Endothelial cell of umbilical vein (primary cell): ENCODE measurements at regions of chr15 and their contacts with region 1.

Region 1: DNA sequence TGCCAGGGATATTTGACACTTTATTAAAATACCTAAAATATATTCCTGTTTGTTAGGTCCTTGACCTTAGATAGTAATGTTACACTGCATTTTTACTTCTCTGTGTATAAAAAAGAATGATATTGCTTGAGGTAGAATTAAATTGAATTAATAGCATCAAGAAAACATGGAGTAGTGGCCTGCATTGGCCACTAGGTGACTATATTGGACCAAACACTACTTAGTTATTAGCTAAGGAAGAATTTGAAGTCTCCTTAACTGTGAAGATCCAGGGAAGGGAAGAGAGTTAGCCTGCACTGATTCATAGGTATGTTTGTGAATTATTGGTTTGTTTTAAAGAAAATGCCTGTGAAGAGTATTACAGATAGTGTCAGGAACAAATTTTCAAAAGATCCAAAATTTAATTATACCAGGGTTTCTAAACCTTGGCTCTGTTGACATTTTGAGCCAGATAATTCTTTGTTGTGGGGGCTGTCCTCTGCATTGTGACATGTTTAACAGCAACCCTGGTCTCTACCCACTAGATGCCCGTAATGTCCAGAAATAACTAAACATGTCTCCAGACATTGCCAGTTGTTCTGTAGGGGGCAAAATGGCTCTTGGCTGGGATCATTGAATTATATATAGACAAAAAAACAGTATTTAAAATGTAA is 103.6 kb upstream of the THSD4 start:
- DNase-seq: peak; percentile 56
- H3K4me3 ChIP-seq: no peak overlapping the region
- H3K27ac ChIP-seq: no peak overlapping the region
- H3K4me1 ChIP-seq: no peaks in the 10 kb centered on the region
- H3K27me3 ChIP-seq: no peaks in the 10 kb centered on the region
- CTCF ChIP-seq: peak; percentile 54 to 60
- POLR2A ChIP-seq: no peak

Region 2: DNA sequence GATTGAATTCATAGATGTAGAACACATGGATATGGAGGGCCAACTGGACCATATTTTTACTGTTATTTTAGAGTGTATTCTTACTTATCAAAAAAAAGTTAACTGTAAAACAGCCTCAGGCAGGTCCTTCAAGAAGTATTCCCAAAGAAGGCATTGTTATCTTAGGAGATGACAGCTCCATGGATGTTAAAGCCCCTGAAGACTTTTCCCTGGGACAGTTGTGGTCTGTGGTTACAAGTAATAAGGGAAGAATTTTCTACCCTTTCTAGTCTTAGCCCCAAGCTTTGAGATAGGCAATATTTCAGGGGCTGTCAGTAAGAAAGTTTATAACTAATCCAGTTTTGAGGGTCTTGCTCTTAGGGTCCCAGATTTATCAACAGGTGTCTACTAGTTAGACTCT is 56.5 kb before region 1 on chr15:
- CTCF ChIA-PET with region 1: interaction called, 3 read pairs
- POLR2A ChIA-PET with region 1: no interaction called
- dilution Hi-C with region 1: no loop called
- intact Hi-C with region 1: loop called (anchors 5 kb)
- DNase-seq: no peak
- H3K4me3 ChIP-seq: no peak overlapping the region
- H3K27ac ChIP-seq: no peak overlapping the region
- H3K4me1 ChIP-seq: no peaks in the 10 kb centered on the region
- H3K27me3 ChIP-seq: no peaks in the 10 kb centered on the region
- CTCF ChIP-seq: no peak
- POLR2A ChIP-seq: no peak

Region 3: DNA sequence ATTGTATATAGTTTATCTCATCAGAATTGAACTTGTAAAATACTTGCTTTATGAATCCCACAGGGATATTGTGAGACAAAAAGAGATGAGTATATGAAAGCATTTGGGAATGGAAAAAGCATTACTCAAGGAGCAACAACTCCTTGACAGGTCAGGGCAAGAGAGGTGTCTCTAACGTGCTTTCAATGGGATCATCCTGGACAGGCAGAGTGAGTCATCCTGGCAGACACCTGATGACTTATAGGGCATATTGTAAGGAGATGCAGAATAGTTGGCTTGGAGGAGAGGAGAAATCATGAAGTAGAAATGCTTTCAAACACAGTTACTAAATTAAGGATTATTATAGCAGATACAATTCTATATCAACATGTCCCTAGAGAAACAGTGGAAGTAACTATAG is 31.7 kb after region 1 on chr15:
- CTCF ChIA-PET with region 1: interaction called, 10 read pairs
- POLR2A ChIA-PET with region 1: no interaction called
- dilution Hi-C with region 1: no loop called
- intact Hi-C with region 1: no loop called
- DNase-seq: no peak
- H3K4me3 ChIP-seq: no peak overlapping the region
- H3K27ac ChIP-seq: no peak overlapping the region
- H3K4me1 ChIP-seq: no peaks in the 10 kb centered on the region
- H3K27me3 ChIP-seq: no peaks in the 10 kb centered on the region
- CTCF ChIP-seq: no peak
- POLR2A ChIP-seq: no peak

Region 4: DNA sequence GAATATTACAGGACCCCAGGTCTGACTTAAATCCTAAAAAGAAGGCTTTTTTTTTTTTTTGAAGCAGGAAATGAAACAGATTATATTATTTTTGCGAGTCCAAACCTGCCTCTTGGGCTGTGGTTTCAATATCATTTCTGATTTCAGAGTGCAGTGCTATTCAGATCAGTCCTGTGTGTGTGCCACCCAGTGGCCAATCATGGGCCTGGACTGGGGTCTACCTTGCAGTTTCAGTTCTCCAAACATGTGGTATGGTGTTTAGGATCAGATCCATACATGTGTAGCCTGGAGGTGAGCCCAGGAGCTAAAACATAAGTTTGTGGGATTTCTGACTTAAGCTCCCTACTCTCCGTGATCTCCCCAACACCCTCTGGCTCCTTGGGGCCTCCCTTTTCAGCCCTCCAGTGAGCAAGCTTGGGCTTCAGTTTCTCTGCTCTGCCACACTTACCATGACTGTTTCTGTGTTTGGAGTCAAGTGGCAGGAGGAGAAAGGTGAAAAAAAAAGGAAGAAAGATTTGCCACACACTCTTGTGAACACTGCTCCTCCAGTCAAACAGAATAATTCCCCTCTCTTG is 91.6 kb after region 1 on chr15:
- CTCF ChIA-PET with region 1: interaction called, 60 read pairs
- POLR2A ChIA-PET with region 1: no interaction called
- dilution Hi-C with region 1: no loop called
- intact Hi-C with region 1: loop called (anchors 1 kb)
- DNase-seq: peak; percentile 38
- H3K4me3 ChIP-seq: no peak overlapping the region
- H3K27ac ChIP-seq: no peak overlapping the region
- H3K4me1 ChIP-seq: no peaks in the 10 kb centered on the region
- H3K27me3 ChIP-seq: no peaks in the 10 kb centered on the region
- CTCF ChIP-seq: peak; percentile 48 to 78
- POLR2A ChIP-seq: no peak

Region 5: DNA sequence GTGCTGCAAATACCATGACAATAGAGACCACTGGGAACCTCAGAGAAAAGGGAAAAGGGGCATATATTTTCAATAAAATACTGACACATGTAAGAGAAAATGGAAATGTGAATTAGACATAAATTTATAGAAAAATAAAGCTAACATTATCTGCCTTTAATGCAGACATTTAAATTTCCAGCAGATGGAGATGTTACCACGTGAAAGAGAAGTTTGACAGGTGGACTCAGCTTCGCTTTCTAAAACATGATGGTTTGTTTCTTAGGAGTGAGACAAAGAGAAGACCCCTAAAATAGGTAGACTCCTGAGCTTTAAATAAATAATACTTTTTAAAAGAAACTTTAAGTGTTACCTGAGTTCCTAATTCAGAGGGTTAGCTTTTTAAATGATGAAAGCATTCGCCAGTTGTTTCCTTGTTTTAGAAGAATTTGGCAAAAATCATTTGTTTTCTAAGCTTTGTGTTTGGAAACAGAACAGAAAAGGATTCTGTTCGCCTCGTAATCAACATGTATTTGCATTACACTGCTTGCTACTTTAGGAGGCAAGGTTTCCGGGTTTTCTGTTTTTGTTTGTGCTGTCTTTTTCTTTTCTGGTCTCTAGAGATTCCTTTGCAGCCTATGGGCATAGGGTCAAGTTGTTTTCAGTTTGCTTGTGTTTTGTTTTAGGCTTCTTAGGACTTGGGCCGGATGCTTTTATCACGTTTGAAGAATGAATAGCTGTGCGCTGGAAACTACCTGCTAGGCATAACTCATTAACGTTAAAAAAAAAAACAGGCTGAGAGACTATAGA is 375.0 kb after region 1 on chr15:
- CTCF ChIA-PET with region 1: interaction called, 12 read pairs
- POLR2A ChIA-PET with region 1: no interaction called
- dilution Hi-C with region 1: no loop called
- intact Hi-C with region 1: no loop called
- DNase-seq: peak; percentile 44
- H3K4me3 ChIP-seq: no peak overlapping the region
- H3K27ac ChIP-seq: no peak overlapping the region
- H3K4me1 ChIP-seq: peaks cover 11% of the 10 kb centered on the region
- H3K27me3 ChIP-seq: no peaks in the 10 kb centered on the region
- CTCF ChIP-seq: peak; percentile 11 to 12
- POLR2A ChIP-seq: no peak

Region 6: GRCh38 chr15:71679223-71680053 is 667.8 kb after region 1 on chr15:
- CTCF ChIA-PET with region 1: no interaction called
- POLR2A ChIA-PET with region 1: no interaction called
- dilution Hi-C with region 1: no loop called
- intact Hi-C with region 1: no loop called
- DNase-seq: peak; percentile 57
- H3K4me3 ChIP-seq: no peak overlapping the region
- H3K27ac ChIP-seq: peak overlapping the region; percentile 36
- H3K4me1 ChIP-seq: peaks cover 15% of the 10 kb centered on the region
- H3K27me3 ChIP-seq: no peaks in the 10 kb centered on the region
- CTCF ChIP-seq: no peak
- POLR2A ChIP-seq: no peak